PC-9 (cell line): ENCODE measurements at regions of chr13 and their contacts with region 1.

Region 1: GRCh38 chr13:44306401-44307192 is 67.0 kb upstream of the SERP2 start:
- DNase-seq: peak; percentile 62 to 88
- H3K4me3 ChIP-seq: peak overlapping the region; percentile 47; the same call in 1 of the 2 replicates
- H3K27ac ChIP-seq: peak overlapping the region; percentile 100
- H3K4me1 ChIP-seq: peaks cover 77% of the 10 kb centered on the region
- H3K27me3 ChIP-seq: no peaks in the 10 kb centered on the region
- CTCF ChIP-seq: no peak

Region 2: DNA sequence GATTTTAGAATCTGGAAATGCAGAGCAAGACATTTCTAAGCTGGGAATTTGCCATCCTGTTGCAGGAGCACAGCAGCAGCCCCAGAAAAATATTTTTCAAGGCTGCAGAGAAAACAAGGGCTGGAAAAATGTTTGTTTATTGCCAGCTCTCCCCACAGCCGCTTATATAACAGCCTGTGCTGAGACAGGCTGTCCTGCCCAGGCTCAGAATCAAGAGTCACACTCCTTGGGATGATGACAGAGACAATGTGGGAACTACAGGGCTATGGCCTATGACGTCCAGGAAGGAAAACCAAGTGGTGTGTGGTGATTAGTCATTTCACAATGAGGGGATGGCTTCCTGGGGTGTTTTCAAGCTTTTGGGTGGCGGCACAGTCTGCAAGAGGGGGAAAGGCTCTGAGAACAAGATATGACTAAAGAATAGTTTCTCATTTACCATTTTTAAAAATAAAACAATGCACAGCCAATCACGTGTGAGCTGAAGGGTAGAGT is 69.3 kb before region 1 on chr13:
- CTCF ChIA-PET with region 1: interaction called, 3 read pairs
- POLR2A ChIA-PET with region 1: no interaction called
- intact Hi-C with region 1: loop called (anchors 2 kb)
- DNase-seq: peak; percentile 25 to 58
- H3K4me3 ChIP-seq: no peak overlapping the region
- H3K27ac ChIP-seq: peak overlapping the region; percentile 58
- H3K4me1 ChIP-seq: peaks cover 39% of the 10 kb centered on the region
- H3K27me3 ChIP-seq: no peaks in the 10 kb centered on the region
- CTCF ChIP-seq: no peak

Region 3: DNA sequence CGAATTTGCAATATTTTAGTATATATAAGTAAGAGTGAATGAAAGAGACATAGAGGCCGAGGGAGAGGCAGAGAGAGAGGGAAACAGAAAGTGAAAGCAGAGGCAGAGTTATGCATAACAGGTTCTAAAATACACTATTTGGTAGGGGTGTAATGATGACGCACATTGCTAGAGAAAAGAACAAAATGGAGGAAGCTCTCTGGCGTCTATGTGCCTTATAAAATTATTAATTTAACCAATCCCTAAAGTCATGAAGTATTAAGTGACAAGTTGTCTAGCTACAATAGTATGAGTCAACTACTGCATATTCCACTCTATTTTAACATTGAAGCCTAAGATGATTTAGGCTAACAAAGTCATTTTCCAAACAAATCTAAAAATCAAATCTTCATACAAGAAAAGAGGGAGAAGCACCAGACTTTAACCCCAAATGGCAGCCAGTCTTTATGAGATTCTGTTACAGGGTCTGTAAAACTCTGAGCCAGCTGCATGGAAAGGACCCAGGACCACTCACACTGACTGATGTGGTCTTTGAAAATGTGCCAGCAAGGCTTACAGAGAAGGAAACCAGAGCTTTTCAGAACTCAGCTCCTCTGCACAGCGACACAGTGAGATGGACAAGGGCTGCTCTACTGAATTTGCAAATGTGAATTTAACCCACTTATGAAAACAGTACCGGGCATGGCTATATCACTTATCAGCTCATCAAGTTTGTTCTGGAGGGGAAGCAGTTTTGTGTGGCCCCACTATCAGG is 32.0 kb before region 1 on chr13:
- CTCF ChIA-PET with region 1: no interaction called
- POLR2A ChIA-PET with region 1: interaction called, 9 read pairs
- intact Hi-C with region 1: loop called (anchors 5 kb)
- DNase-seq: peak in 1 of 2 experiments; percentile 48
- H3K4me3 ChIP-seq: peak overlapping the region; percentile 37; the same call in 1 of the 2 replicates
- H3K27ac ChIP-seq: no peak overlapping the region
- H3K4me1 ChIP-seq: peaks cover 25% of the 10 kb centered on the region
- H3K27me3 ChIP-seq: no peaks in the 10 kb centered on the region
- CTCF ChIP-seq: no peak

Region 4: DNA sequence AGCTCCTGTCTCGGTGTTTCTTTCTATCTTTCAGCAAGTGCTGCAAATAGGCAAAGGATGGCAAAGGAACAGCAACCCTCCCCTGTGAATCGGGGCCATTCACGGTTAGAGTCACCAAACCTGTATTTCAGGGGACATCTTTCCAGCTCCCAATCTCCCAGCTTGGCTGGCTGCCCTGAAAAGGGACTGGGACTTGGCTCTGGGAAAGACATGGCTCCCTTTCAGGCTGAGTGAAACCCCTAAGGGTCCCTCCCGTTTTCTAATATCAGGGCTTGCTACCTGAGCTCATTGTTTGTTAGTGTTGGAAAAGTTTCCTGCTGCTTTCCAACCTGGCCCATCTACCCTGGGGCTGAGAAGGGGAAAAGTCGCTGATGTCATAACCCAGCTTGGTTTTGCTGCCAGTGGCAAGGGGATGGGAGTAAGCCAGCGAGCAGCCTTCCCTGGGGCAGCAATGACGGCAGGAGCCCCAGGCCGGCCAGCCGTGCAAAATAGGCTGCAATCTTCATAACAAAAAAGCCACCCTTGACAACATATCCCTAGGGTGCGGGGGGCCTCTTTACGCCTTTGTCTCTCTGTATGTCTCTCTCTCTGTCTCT is 97.0 kb after region 1 on chr13:
- CTCF ChIA-PET with region 1: no interaction called
- POLR2A ChIA-PET with region 1: no interaction called
- intact Hi-C with region 1: loop called (anchors 1 kb)
- DNase-seq: peak; percentile 61 to 69
- H3K4me3 ChIP-seq: peak overlapping the region; percentile 27; the same call in 1 of the 2 replicates
- H3K27ac ChIP-seq: peak overlapping the region; percentile 67
- H3K4me1 ChIP-seq: peaks cover 49% of the 10 kb centered on the region
- H3K27me3 ChIP-seq: no peaks in the 10 kb centered on the region
- CTCF ChIP-seq: no peak